Sigmoid colon (tissue), 7 donors: ENCODE measurements at regions of chr10 and their contacts with region 1.

Region 1: DNA sequence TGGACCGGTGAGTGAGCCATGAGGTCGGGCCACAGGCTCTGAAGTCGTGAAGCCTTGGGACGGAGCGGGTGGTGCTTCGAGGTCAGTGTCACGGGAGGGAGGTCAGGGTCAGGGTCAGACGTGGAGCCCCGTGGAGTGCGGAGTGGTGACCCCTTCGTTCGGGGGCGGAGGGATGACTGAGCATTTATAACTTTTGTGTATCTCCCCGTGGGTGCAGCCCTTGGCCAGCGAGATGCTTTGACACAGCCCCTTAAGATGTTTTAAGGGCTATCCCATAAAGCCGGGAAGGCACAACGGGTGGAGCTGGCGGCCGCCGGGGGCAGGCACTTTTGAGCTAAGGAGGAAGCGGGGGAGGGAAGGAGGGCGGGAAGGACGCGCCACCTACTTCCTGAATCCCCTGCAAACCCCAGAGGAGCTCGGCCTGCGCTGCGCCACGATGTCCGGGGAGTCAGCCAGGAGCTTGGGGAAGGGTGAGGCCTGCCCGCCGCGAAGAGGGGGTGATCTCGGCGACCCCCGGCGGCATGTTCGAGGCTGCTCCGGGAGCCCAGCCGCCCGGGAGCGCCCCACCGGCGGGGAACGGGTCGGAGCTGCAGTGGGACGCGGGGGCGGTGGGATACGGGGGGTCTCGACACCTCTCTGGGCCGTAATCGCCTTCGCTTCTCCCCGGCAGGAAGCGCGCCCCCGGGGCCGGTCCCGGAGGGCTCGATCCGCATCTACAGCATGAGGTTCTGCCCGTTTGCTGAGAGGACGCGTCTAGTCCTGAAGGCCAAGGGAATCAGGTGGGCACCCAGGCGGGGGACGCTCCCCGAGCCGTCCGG is at the start of gene GSTO1:
- DNase-seq: peak; percentile 92
- H3K4me3 ChIP-seq: peak within 1 kb of the TSS; percentile 71 to 95 (median 84)
- H3K27ac ChIP-seq: peak within 1 kb of the TSS; percentile 95 to 98 (median 96)
- H3K4me1 ChIP-seq: peaks cover 0 to 36% (median 24%) of the 10 kb centered on the region in 4 donors
- H3K27me3 ChIP-seq: no peaks in the 10 kb centered on the region
- CTCF ChIP-seq: no peak
- EP300 ChIP-seq: no peak
- POLR2A ChIP-seq: peak; percentile 61 to 70
- total RNA-seq, gene GSTO1: 77.5 to 178 (median 131) TPM

Region 2: DNA sequence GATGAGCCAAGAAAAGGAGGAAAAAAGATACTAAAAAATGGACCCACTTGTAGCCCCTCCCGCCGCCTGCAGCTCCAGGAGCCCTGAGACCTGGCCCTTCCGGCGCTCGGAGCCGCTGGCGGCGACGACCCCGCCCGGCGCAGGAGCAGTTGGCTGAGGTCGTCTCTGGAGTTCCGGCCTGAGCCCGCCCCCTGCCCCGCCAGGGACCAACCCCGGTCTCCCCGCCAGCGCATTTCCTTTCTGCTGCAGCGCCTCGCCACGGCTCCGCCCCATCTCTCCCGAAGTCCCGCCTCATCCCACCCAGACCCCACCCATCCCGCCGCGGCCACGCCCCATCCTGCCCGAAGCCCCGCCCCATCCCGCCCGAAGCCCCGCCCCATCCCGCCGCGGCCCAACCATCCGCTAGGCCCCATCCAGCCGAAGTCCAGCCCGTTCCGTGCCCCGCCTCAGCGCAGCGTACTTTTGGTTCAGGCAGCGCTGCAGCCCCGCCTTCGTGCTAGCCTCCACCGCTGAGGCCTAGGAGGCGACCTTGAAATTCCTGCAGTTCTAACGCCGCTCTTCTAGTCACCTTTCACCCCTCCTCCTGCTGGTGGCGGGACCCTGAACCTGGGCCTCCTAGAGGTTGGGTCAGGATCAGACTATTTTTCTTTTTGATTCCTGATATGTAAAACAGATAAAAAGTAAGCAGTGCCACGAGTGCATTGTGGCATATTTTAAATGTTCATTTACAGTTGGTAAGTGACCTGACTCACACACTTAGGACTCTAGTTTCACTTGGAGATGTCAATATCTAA is 336.5 kb before region 1 on chr10 and contains the start of gene STN1:
- intact Hi-C with region 1: loop called (anchors 10 kb)
- DNase-seq: peak; percentile 99
- H3K4me3 ChIP-seq: peak within 1 kb of the TSS; percentile 46 to 78 (median 70)
- H3K27ac ChIP-seq: peak within 1 kb of the TSS; percentile 91 to 97 (median 94)
- H3K4me1 ChIP-seq: peaks cover 0 to 31% (median 27%) of the 10 kb centered on the region in 4 donors
- H3K27me3 ChIP-seq: no peaks in the 10 kb centered on the region
- CTCF ChIP-seq: peak in 1 of 4 experiments; percentile 14
- EP300 ChIP-seq: peak in 1 of 4 donors; percentile 43
- POLR2A ChIP-seq: peak; percentile 90 to 96
- total RNA-seq, gene STN1: 16.0 to 22.5 (median 21.1) TPM

Region 3: GRCh38 chr10:104231784-104232612 is 22.7 kb before region 1 on chr10 and contains the start of gene CFAP43:
- intact Hi-C with region 1: loop called (anchors 2 kb)
- DNase-seq: peak; percentile 99
- H3K4me3 ChIP-seq: peak within 1 kb of the TSS; percentile 54 to 88 (median 79)
- H3K27ac ChIP-seq: peak within 1 kb of the TSS in 3 of 4 donors; percentile 31 to 47 (median 40)
- H3K4me1 ChIP-seq: peaks cover 0 to 15% (median 6%) of the 10 kb centered on the region in 4 donors
- H3K27me3 ChIP-seq: no peaks in the 10 kb centered on the region
- CTCF ChIP-seq: no peak
- EP300 ChIP-seq: no peak
- POLR2A ChIP-seq: no peak
- total RNA-seq, gene CFAP43: 0.36 to 0.83 (median 0.59) TPM